ENCODE measurements at regions of chr6 and their contacts with region 1.

Region 1: GRCh38 chr6:3052481-3053230 is 15.6 kb upstream of the RIPK1 start:
- DNase-seq: no peak
- H3K4me3 ChIP-seq: no peak overlapping the region
- H3K27ac ChIP-seq: no peak overlapping the region
- H3K4me1 ChIP-seq: no peaks in the 10 kb centered on the region
- H3K27me3 ChIP-seq: no peaks in the 10 kb centered on the region
- CTCF ChIP-seq: no peak

Region 2: DNA sequence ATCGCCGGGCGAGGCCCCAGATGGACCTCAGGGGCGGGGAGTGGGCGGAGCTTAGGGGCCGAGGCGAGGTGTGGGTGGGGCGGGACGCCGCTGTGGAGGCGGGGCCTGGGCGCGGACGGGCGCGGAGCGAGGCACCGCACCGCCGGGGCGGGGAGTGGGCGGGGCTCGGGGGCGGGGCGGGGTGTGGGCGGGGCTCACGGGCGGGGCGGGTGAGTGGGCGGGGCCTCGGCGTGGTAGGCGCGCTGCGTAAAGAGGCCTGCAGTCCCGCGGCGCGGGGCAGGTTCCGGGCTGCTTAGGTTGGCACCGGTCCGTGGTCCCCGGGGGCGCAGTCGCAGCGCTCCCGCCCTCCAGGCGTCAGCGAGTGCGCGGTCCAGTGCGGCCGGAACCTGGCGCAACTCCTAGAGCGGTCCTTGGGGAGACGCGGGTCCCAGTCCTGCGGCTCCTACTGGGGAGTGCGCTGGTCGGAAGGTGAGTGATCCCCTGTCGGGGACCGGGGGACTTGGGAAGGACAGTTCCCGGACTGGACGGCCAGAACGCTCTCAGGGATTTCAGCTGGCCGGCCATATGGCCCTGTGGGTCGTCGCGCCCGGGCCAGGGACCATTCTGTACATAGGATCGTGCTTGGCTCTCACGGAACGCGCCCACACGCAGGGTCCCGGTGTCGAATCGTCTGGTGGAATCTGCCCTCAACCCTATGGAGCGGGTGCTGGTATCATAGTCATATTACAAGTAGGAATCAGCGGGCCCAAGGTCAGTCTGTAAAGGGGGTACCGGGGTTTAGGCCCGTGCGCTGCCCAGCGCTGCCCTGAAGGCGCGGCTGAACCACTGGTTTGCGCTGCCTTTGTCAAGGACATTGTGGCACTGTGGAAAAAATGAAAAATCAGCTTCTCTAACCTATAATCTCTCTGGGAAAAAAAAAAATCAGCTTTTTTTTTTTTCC is 52.8 kb before region 1 on chr6 and contains the start of gene NQO2:
- CTCF ChIA-PET with region 1: no interaction called
- dilution Hi-C with region 1: no loop called
- in situ Hi-C with region 1: loop called in 1 of 2 experiments (anchors 10 kb)
- intact Hi-C with region 1: loop called (anchors 1 kb)
- DNase-seq: no peak
- H3K4me3 ChIP-seq: peak within 1 kb of the TSS; percentile 62 to 94 (median 80)
- H3K27ac ChIP-seq: peak within 1 kb of the TSS; percentile 47
- H3K4me1 ChIP-seq: peaks cover 22% of the 10 kb centered on the region
- H3K27me3 ChIP-seq: no peaks in the 10 kb centered on the region
- CTCF ChIP-seq: peak in 1 of 2 donors; percentile 6
- total RNA-seq, gene NQO2: 17.0 to 20.3 TPM

Region 3: GRCh38 chr6:3072798-3073197 is 20.1 kb after region 1 on chr6:
- CTCF ChIA-PET with region 1: no interaction called
- dilution Hi-C with region 1: no loop called
- in situ Hi-C with region 1: no loop called
- intact Hi-C with region 1: no loop called
- DNase-seq: no peak
- H3K4me3 ChIP-seq: no peak overlapping the region
- H3K27ac ChIP-seq: no peak overlapping the region
- H3K4me1 ChIP-seq: peaks cover 15% of the 10 kb centered on the region
- H3K27me3 ChIP-seq: no peaks in the 10 kb centered on the region
- CTCF ChIP-seq: no peak

Region 4: GRCh38 chr6:3108746-3109414 is 56.2 kb after region 1 on chr6:
- CTCF ChIA-PET with region 1: no interaction called
- dilution Hi-C with region 1: loop called (anchors 5 kb)
- in situ Hi-C with region 1: no loop called
- intact Hi-C with region 1: no loop called
- DNase-seq: no peak
- H3K4me3 ChIP-seq: no peak overlapping the region
- H3K27ac ChIP-seq: no peak overlapping the region
- H3K4me1 ChIP-seq: peaks cover 4% of the 10 kb centered on the region
- H3K27me3 ChIP-seq: no peaks in the 10 kb centered on the region
- CTCF ChIP-seq: no peak

Measured in mammary epithelial cell (primary cell).